Activated B cell treated with CpG ODN at 0.5 μM for 24 hours (primary cell): ENCODE measurements at regions of chr17 and their contacts with region 1.

Region 1: DNA sequence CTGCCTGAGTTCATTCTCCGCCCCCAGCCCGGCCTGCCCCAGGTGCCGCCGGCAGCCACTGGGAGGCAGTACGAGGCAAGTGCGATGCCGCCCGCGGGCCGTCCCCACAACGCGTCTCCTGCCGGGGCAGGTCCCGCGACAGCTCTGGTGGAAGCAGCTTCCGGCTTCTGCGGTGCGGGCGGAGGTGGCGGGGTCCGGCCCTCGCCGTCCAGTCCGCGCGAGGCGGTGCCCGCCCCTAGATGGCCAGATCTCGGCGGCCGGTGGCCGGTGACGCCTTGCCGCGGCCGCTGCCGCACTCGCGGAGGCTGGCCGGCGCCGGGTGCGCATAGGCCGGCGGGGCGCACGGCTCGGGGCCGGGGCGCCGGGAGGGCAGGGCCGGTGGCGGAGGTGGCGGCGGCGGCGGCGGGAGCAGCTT is 1.8 kb downstream of the GJD3 start:
- DNase-seq: peak; percentile 73
- ATAC-seq: peak; percentile 85
- H3K4me3 Mint-ChIP-seq: peak overlapping the region; percentile 58
- H3K27ac Mint-ChIP-seq: peak overlapping the region; percentile 67
- H3K4me1 Mint-ChIP-seq: peaks cover 17% of the 10 kb centered on the region
- H3K27me3 Mint-ChIP-seq: peaks cover 14% of the 10 kb centered on the region
- CTCF ChIP-seq: no peak

Region 2: DNA sequence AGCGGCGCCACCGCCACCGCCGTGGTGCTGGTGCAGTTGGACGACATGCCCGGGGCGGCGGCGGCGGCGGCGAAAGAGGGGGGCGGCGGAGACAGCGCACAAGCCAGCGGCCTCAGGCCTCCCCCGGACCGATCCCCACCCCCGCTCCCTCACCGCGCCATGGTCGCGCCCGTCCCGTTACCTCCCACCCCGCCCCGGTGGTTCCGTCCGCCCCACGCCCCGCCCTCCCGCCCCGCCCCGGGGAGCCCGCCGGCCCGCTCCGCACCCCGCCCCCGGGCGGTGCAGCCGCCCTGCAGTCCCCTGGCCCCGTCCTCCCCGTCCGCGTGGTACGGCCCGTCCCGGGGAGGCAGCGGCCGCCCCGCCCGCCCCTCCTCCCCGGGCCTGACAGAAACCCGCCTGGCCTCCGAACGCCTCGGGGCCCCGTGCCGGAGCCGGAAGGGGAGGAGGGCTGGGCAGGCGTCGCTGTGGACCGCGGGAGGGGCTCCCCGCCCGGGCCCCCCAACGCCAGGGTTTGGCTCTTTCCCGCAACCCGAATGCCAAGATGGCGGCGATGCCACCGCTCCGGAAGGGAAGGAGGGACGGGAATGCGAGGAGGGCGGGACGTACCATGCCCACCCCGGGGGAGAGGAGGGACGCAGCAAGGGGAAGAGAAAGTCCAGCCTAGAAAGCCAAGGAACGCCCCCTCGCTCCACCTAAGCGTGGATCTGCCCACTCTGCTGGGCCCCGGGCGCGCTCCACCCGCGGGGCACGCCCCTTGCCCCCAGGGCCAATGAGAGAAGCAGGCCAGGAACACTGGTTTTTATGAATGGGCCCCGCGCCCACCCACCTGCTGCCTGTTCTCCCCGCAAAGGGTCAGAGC is 1563.1 kb before region 1 on chr17 and contains the start of gene PIP4K2B:
- CTCF ChIA-PET with region 1: no interaction called
- POLR2A ChIA-PET with region 1: no interaction called
- intact Hi-C with region 1: no loop called
- DNase-seq: peak; percentile 86
- ATAC-seq: peak; percentile 85
- H3K4me3 Mint-ChIP-seq: peak within 1 kb of the TSS; percentile 88
- H3K27ac Mint-ChIP-seq: peak within 1 kb of the TSS; percentile 87
- H3K4me1 Mint-ChIP-seq: peaks cover 32% of the 10 kb centered on the region
- H3K27me3 Mint-ChIP-seq: no peaks in the 10 kb centered on the region
- CTCF ChIP-seq: no peak
- total RNA-seq, gene PIP4K2B: 32.1 and 33.0 TPM in 2 replicates

Region 3: GRCh38 chr17:40303009-40303657 is 59.6 kb before region 1 on chr17:
- CTCF ChIA-PET with region 1: interaction called, 466 read pairs
- POLR2A ChIA-PET with region 1: no interaction called
- intact Hi-C with region 1: no loop called
- DNase-seq: no peak
- ATAC-seq: peak; percentile 83
- H3K4me3 Mint-ChIP-seq: no peak overlapping the region
- H3K27ac Mint-ChIP-seq: no peak overlapping the region
- H3K4me1 Mint-ChIP-seq: peaks cover 7% of the 10 kb centered on the region
- H3K27me3 Mint-ChIP-seq: no peaks in the 10 kb centered on the region
- CTCF ChIP-seq: no peak

Region 4: DNA sequence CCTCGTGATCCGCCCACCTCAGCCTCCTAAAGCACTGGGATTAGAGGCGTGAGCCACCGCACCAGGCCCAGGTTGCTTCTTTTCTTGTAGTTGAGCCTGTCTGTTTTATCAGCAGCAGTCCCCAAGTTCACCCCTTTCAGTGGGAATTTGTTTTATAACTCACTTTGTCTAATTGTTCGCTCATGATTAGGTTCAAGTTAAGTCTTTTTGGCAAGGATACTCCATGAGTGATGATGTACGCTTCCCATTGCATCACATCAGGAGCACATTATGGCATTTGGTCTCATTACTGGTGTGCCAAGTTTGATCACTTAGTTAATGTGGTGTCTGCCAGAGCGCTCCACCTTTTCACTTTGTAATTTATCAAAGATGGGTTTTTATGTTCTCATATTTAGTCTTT is 16.3 kb after region 1 on chr17:
- CTCF ChIA-PET with region 1: no interaction called
- POLR2A ChIA-PET with region 1: no interaction called
- intact Hi-C with region 1: no loop called
- DNase-seq: no peak
- ATAC-seq: no peak
- H3K4me3 Mint-ChIP-seq: no peak overlapping the region
- H3K27ac Mint-ChIP-seq: no peak overlapping the region
- H3K4me1 Mint-ChIP-seq: peaks cover 3% of the 10 kb centered on the region
- H3K27me3 Mint-ChIP-seq: peaks cover 3% of the 10 kb centered on the region
- CTCF ChIP-seq: no peak

Region 5: GRCh38 chr17:40417609-40418427 is 55.1 kb after region 1 on chr17 and contains the start of gene TOP2A:
- CTCF ChIA-PET with region 1: interaction called, 6 read pairs
- POLR2A ChIA-PET with region 1: no interaction called
- intact Hi-C with region 1: loop called (anchors 1 kb)
- DNase-seq: peak; percentile 91
- ATAC-seq: peak; percentile 100
- H3K4me3 Mint-ChIP-seq: peak within 1 kb of the TSS; percentile 94
- H3K27ac Mint-ChIP-seq: peak within 1 kb of the TSS; percentile 84
- H3K4me1 Mint-ChIP-seq: peaks cover 23% of the 10 kb centered on the region
- H3K27me3 Mint-ChIP-seq: no peaks in the 10 kb centered on the region
- CTCF ChIP-seq: no peak
- total RNA-seq, gene TOP2A: 5.3 and 6.6 TPM in 2 replicates

Region 6: DNA sequence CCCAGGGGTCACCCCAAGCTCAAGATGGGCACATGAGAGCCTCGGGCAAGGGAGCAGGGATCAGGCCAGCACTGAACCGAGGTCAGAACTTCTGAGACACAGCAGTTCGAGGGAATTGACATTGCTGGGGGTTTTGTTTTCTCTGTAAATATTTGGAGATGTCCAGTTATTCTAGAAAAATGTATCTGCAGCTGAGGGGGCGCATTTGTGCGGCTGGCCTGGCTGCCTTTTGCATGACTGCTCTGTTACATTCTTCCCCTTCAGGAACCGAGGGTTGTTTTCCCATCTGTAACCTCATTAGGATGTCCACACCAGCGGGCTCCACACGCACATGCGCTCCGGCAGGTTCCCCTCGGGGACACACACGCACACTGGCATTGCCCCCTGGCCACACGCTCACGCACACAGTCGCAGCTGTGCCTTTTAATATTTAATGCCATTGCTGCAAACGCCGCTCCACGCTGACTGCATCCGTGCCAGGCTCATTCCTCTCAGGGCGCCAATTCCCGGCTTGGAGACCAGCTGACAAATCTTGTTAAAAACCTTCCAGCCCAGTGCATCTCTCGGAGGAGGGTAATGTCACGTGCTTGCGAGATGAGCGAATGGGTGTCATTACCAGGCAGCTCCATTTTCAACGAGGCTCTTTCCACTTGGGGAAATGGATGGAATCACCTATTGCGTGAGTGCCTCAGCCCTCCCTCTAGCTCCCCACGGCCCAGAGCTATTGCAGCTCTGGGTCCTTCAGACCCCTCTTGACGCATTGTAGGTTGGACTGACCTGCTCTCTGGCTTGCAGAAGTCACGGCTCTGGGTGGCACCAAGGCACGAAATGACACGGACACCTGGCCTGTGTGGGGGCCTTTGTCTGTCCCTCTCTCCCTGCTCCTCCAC is 189.4 kb after region 1 on chr17:
- CTCF ChIA-PET with region 1: interaction called, 4 read pairs
- POLR2A ChIA-PET with region 1: interaction called, 4 read pairs
- intact Hi-C with region 1: loop called (anchors 5 kb)
- DNase-seq: peak; percentile 32
- ATAC-seq: peak; percentile 3
- H3K4me3 Mint-ChIP-seq: peak overlapping the region; percentile 36
- H3K27ac Mint-ChIP-seq: peak overlapping the region; percentile 99
- H3K4me1 Mint-ChIP-seq: peaks cover 100% of the 10 kb centered on the region
- H3K27me3 Mint-ChIP-seq: no peaks in the 10 kb centered on the region
- CTCF ChIP-seq: no peak

Region 7: GRCh38 chr17:40803617-40804082 is 440.9 kb after region 1 on chr17:
- CTCF ChIA-PET with region 1: no interaction called
- POLR2A ChIA-PET with region 1: no interaction called
- intact Hi-C with region 1: loop called (anchors 5 kb)
- DNase-seq: peak; percentile 54
- ATAC-seq: peak; percentile 94
- H3K4me3 Mint-ChIP-seq: no peak overlapping the region
- H3K27ac Mint-ChIP-seq: no peak overlapping the region
- H3K4me1 Mint-ChIP-seq: peaks cover 3% of the 10 kb centered on the region
- H3K27me3 Mint-ChIP-seq: peaks cover 51% of the 10 kb centered on the region
- CTCF ChIP-seq: peak; percentile 44